Adrenal gland (tissue), 19 donors: ENCODE measurements at regions of chr4 and their contacts with region 1.

Region 1: DNA sequence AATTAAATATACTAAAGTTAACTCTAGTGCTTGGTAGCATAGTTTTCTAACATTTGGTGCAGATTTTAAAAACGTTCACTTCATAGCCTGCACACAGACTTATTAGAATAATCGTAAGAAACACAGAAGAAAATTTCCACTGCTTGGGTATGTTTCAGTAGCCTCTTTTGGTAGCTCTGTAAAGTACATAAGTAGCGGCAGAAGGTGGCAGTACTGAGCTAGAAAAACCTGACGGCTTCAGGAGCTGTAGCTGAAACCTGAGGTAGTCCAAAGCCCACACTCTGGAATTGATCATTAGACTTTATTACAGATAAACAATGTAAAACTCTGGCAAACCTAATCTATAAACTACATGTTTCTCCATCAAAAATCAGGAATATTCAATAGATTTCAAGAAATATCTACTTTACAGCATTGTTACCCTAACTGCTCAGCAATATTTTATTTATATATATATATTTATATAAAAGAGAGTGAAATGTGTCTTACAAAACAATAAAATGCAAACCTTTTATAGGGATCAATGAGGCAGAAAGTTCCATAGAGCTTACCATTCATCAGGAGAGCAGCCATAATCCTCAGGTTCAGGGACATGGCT is 88.2 kb downstream of the ATP8A1 start:
- DNase-seq: peak; percentile 63 to 87 (median 75)
- H3K4me3 ChIP-seq: no peak overlapping the region
- H3K27ac ChIP-seq: no peak overlapping the region
- H3K4me1 ChIP-seq: peaks cover 0 to 12% of the 10 kb centered on the region in 2 donors
- H3K27me3 ChIP-seq: no peaks in the 10 kb centered on the region
- CTCF ChIP-seq: peak; percentile 39 to 82 (median 72)
- POLR2A ChIP-seq: no peak

Region 2: DNA sequence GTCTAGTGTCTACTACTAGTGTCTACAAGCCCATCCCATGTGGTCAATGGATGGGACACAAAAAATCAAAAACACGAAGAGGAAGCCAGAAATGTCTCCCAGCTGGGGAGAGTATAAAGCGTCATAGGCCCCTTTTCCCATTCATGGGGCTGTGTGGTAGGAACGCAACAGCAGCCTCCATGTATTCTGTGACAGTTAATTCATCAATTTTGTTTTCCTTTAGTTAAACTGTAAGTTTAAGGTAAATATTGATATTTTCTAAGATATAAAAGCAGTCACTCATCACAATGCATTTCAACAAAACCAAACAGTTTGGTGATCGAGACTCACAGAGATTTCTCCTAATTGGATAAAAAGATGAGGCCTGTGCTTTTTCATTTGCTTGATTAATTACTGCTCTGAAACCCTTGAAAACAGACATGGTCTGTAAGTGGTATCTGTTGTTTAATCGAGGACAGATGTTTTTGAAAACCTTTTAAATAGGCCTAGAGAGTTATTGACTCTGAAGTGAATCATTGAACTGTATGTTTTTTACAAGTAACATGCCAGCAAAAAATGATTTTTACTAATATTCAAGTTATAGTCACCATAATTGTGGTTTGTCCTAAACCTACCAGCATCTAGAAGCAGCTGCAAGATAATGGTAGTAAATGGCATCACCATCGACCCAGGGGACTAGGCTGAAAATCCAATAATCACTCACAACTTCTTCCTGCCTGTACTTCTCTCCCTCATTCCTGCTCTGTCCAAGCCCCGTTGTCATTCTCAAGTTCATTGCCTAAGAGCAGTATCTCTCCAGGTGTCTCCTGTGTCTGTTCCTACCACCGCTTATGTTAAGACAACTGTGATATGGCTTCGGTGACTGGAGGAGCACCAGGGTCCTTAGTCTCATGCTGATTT is 259.1 kb before region 1 on chr4:
- intact Hi-C with region 1: no loop called
- DNase-seq: no peak
- H3K4me3 ChIP-seq: no peak overlapping the region
- H3K27ac ChIP-seq: no peak overlapping the region
- H3K4me1 ChIP-seq: no peaks in the 10 kb centered on the region
- H3K27me3 ChIP-seq: no peaks in the 10 kb centered on the region
- CTCF ChIP-seq: no peak
- POLR2A ChIP-seq: no peak

Region 3: DNA sequence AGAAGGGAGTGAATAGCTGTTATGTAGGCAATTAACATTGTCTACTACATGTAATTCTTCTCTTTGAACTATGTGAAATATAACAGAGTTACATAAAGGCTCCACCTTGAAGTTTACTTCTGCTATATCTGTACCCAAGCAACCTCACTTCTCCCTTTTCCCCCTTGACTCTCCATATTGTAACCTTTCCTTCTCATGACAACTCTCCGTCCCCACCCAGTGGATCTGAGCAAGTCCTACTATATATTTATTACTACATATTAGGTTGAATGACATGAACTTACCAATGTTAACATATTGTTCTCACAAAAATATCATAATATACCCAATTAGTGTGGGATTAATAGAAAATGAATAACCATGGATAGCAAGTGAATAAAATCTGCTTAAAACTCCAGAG is 181.4 kb after region 1 on chr4:
- intact Hi-C with region 1: loop called in 1 of 2 experiments (anchors 5 kb)
- DNase-seq: peak in 3 of 7 donors; percentile 14 to 32 (median 26)
- H3K4me3 ChIP-seq: no peak overlapping the region
- H3K27ac ChIP-seq: no peak overlapping the region
- H3K4me1 ChIP-seq: no peaks in the 10 kb centered on the region
- H3K27me3 ChIP-seq: no peaks in the 10 kb centered on the region
- CTCF ChIP-seq: peak; percentile 10 to 54 (median 38)
- POLR2A ChIP-seq: no peak

Region 4: DNA sequence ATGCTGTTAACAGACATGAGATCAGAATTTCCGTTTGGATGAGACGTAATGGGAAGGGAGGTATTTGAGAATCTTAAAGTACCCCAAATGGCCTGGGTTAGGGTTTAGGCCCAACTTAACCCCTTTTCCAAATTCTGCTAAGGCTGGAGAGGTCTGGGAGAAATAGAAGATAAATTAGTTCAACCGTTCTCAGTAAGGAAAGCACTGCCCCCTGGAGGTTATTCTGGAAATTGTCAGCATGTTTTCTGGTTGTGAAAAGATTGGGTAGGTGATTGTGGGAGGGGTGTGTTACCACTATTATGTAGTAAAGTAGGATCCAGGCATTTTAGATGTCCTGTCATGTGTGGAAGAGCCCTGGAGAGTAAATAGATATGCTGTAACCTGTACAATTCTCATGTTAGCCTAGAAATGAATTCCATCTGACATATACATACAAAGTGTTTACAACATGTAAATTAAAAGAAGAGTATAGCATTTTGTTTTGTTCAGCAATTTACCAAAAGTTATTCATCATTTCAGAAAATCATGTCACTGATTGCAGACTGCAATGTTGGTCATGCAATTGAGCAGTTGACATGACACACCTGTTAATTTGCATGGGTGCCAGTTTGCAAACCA is 297.0 kb after region 1 on chr4:
- intact Hi-C with region 1: loop called (anchors 5 kb)
- DNase-seq: peak; percentile 34 to 75 (median 53)
- H3K4me3 ChIP-seq: no peak overlapping the region
- H3K27ac ChIP-seq: no peak overlapping the region
- H3K4me1 ChIP-seq: no peaks in the 10 kb centered on the region
- H3K27me3 ChIP-seq: no peaks in the 10 kb centered on the region
- CTCF ChIP-seq: peak; percentile 51 to 77 (median 75)
- POLR2A ChIP-seq: no peak